OCI-LY7 (cell line): ENCODE measurements at regions of chr3 and their contacts with region 1.

Region 1: DNA sequence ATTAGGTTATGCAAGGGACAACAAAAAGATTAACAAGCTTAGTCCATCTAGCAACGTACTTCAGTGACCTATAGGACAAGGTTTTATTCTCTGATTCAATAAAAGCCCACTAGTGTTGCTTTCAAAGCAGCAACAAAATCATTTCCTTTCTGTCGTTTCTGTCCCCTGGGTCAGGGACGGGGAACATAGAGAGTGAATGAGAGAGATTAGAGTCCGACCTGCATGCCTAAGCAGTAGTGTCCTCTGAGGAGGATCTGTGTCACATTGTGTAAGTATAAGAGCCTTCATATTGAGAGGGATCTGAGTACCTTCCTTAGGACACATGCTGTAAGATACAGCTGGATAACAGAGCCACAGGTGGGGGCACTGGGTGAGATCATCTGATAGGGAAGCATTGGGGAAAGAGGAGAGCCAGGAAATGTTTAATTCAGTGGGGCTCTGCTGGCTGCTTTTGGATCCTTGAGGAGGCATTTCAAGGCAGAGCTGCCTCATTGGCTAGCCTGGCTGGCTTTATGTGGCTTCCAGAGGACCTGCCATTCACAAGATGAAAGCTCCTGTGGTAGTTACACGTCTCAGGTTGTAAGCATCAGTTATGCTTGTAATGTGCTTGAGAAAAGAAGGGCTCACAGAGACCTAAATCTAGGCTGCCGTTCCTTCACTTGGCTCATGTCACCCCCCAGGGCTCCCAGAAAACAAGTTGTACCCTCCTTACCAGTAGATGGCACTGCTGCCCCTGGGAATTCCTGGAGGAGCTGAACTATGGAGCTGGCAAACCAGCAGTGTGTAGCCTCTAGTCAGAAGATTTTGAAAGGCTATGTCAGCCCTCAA is 2.7 kb downstream of the TMEM108 start:
- DNase-seq: peak; percentile 62
- H3K4me3 ChIP-seq: no peak overlapping the region
- H3K27ac ChIP-seq: no peak overlapping the region
- H3K4me1 ChIP-seq: no peaks in the 10 kb centered on the region
- CTCF ChIP-seq: peak; percentile 84

Region 2: GRCh38 chr3:133093366-133093765 is 52.5 kb after region 1 on chr3:
- CTCF ChIA-PET with region 1: no interaction called
- POLR2A ChIA-PET with region 1: no interaction called
- intact Hi-C with region 1: no loop called
- DNase-seq: no peak
- H3K4me3 ChIP-seq: no peak overlapping the region
- H3K27ac ChIP-seq: no peak overlapping the region
- H3K4me1 ChIP-seq: no peaks in the 10 kb centered on the region
- CTCF ChIP-seq: no peak

Region 3: DNA sequence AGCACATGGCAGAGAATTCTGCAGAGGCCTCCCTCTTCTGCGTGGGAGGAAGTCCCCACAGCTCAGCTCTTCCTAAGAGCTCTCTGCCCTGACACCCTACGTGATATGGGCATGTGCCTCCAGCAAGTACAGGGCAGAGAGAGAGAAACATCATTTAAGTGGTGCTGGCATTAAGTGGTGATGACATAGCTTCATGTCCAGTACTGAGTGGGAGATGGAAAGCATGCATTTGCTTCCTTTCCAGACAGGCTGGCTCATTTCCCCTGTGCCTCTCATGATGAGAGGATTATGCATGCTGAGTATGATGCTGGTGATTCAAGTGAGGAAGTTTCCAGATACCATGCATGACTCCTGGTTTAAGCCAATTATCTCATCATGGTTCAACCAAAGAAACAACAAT is 385.8 kb after region 1 on chr3:
- CTCF ChIA-PET with region 1: no interaction called
- POLR2A ChIA-PET with region 1: no interaction called
- intact Hi-C with region 1: loop called (anchors 1 kb)
- DNase-seq: no peak
- H3K4me3 ChIP-seq: no peak overlapping the region
- H3K27ac ChIP-seq: no peak overlapping the region
- H3K4me1 ChIP-seq: peaks cover 4% of the 10 kb centered on the region
- CTCF ChIP-seq: no peak